GM10248 (cell line): ENCODE measurements at regions of chr3 and their contacts with region 1.

Region 1: GRCh38 chr3:128572644-128573105 is 77.9 kb downstream of the RPN1 start:
- DNase-seq: peak; percentile 46
- CTCF ChIP-seq: no peak

Region 2: DNA sequence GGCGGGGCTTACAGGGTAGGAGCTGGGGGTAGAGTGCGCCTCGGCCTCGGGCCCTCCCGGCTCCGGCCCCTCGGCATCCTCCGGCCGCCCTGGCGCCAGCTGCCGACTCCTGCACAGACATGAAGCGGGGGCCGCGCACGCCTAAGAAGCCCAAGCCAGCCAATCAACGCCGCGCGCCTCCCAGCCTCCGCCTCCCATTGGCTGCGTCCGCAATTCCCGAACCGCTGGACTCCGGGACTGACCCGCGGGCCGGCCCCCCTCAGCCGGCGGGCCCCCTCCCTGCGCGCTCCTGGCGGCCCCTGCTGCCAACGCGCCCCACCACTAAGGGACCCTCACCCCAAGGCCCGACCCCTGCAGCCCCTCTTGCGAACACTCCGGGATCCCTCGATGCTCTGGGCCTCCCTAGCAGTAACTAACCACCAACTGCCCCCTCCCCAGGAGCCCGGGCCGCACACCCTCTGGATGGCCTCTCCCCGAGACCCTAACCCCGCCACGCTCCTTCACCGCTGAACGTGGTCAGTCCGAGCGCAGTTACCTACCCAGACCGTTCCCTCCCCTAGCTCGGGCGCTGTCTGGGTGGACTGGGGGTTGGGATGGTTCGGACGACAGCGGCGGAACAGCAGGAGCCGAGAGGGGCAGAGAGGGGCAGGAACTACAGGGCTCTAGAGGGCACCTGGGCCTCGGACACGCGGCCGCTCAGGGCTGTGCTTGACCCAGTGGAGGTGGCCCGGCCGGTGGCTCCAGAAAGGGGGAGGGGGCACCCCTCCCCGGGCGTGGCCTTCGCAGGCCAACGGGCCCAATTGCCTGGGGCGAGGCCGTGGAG is 84.7 kb before region 1 on chr3:
- CTCF ChIA-PET with region 1: no interaction called
- POLR2A ChIA-PET with region 1: no interaction called
- DNase-seq: peak; percentile 66
- CTCF ChIP-seq: no peak

Region 3: GRCh38 chr3:128537121-128537703 is 35.5 kb before region 1 on chr3:
- CTCF ChIA-PET with region 1: no interaction called
- POLR2A ChIA-PET with region 1: no interaction called
- DNase-seq: no peak
- CTCF ChIP-seq: no peak

Region 4: DNA sequence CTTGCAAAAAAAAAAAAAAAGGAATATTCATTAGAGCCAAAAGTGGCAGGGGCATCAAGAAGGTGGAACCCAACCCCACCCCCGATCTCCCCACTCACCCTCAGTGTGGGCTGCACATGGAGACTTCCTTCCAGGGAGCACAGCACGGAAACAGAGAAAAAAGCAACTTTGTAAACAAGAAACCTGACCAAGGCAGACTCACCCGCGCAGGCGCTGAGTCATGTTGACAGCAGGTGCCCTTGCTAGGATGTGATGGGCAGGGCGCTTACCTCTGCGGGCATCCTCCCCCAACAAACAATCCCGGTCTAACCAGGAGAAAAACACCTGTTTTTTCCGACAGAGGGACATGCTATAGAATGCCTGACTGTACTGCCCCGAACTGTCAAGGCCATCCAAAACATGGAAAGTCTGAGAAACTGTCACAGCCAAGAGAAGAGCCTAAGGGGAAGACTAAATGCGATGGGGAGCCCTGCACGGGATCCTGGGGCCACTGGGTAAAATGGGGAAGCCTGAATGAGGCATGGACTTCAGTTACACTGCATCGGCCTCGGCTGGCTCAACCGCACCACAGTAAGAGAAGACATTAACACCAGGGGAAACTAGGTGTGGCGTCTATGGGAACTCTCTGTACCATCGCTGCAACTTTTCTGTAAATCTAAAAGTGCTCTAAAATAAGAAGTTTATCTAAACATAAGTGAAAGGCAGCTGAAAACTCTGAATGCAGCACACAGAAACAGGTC is 13.0 kb before region 1 on chr3:
- CTCF ChIA-PET with region 1: interaction called, 10 read pairs
- POLR2A ChIA-PET with region 1: no interaction called
- DNase-seq: no peak
- CTCF ChIP-seq: no peak